BJ (cell line): ENCODE measurements at regions of chr1 and their contacts with region 1.

Region 1: GRCh38 chr1:210373885-210374599 is 45.3 kb downstream of the HHAT start:
- DNase-seq: peak; percentile 65
- H3K4me3 ChIP-seq: no peak overlapping the region
- H3K27me3 ChIP-seq: no peaks in the 10 kb centered on the region
- CTCF ChIP-seq: peak; percentile 80

Region 2: GRCh38 chr1:210360852-210361477 is 13.1 kb before region 1 on chr1:
- CTCF ChIA-PET with region 1: interaction called, 62 read pairs
- POLR2A ChIA-PET with region 1: no interaction called
- DNase-seq: peak; percentile 26
- H3K4me3 ChIP-seq: no peak overlapping the region
- H3K27me3 ChIP-seq: no peaks in the 10 kb centered on the region
- CTCF ChIP-seq: peak; percentile 80

Region 3: DNA sequence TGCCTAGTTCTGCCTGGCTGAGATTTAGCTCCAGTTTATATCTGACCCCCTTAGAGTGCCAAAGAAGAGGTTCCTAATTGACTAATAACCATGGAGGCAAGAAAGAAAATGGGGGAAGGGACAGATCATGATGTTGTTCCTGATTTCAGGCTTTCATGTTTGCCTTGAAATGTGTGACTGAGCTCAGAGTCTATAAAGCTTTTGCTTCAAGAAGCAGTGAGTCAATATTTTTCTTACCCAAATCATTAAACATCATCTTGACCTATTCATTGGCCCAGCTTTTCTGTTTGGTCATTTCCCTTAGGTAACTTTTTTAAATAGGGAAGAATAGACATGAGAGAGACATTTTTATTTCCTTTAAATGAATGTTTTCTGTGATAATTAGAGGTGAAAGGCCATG is 10.6 kb after region 1 on chr1:
- CTCF ChIA-PET with region 1: interaction called, 22 read pairs
- POLR2A ChIA-PET with region 1: no interaction called
- DNase-seq: no peak
- H3K4me3 ChIP-seq: no peak overlapping the region
- H3K27me3 ChIP-seq: no peaks in the 10 kb centered on the region
- CTCF ChIP-seq: no peak

Region 4: DNA sequence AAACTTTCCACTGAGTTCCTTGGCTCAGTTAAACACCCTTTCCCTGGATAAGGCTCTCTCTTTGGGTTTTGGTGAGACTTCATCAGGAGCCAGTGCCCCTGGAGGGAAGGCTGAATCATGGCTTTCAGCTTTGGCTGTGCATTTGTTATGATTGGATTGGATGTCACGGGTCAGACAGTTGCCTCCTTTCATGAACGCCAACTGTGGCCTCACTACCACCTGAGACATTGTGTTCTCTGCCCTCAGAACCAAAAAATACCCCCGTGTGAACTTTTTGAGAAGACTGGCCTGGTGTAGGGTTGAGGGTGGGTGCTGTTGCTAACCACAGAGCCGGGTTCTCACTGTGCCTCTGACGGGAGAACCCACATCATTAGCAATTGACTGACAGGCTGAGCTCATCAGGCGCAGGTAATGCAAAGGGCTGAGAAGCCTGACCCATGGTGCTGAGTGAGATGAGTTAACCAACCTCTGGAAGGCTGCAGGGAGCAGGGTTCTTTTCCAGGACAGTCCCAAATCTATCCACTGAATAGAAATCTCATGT is 20.3 kb after region 1 on chr1:
- CTCF ChIA-PET with region 1: interaction called, 287 read pairs
- POLR2A ChIA-PET with region 1: interaction called, 3 read pairs
- DNase-seq: no peak
- H3K4me3 ChIP-seq: no peak overlapping the region
- H3K27me3 ChIP-seq: no peaks in the 10 kb centered on the region
- CTCF ChIP-seq: no peak

Region 5: GRCh38 chr1:210400043-210400840 is 26.2 kb after region 1 on chr1:
- CTCF ChIA-PET with region 1: interaction called, 287 read pairs
- POLR2A ChIA-PET with region 1: no interaction called
- DNase-seq: no peak
- H3K4me3 ChIP-seq: no peak overlapping the region
- H3K27me3 ChIP-seq: no peaks in the 10 kb centered on the region
- CTCF ChIP-seq: peak; percentile 92

Region 6: GRCh38 chr1:210438928-210439809 is 65.1 kb after region 1 on chr1:
- CTCF ChIA-PET with region 1: no interaction called
- POLR2A ChIA-PET with region 1: no interaction called
- DNase-seq: peak; percentile 100
- H3K4me3 ChIP-seq: no peak overlapping the region
- H3K27me3 ChIP-seq: no peaks in the 10 kb centered on the region
- CTCF ChIP-seq: no peak